SK-N-SH (cell line): ENCODE measurements at regions of chr1 and their contacts with region 1.

Region 1: GRCh38 chr1:155989242-155990004 is 11.1 kb upstream of the ARHGEF2 start:
- DNase-seq: peak; percentile 85
- H3K4me3 ChIP-seq: no peak overlapping the region; a peak in 1 of 4 replicates
- H3K27ac ChIP-seq: no peak overlapping the region
- H3K4me1 ChIP-seq: no peaks in the 10 kb centered on the region; a peak in 1 of 4 replicates
- H3K27me3 ChIP-seq: no peaks in the 10 kb centered on the region
- CTCF ChIP-seq: peak; percentile 91
- EP300 ChIP-seq: no peak
- RAD21 ChIP-seq: peak; percentile 96

Region 2: DNA sequence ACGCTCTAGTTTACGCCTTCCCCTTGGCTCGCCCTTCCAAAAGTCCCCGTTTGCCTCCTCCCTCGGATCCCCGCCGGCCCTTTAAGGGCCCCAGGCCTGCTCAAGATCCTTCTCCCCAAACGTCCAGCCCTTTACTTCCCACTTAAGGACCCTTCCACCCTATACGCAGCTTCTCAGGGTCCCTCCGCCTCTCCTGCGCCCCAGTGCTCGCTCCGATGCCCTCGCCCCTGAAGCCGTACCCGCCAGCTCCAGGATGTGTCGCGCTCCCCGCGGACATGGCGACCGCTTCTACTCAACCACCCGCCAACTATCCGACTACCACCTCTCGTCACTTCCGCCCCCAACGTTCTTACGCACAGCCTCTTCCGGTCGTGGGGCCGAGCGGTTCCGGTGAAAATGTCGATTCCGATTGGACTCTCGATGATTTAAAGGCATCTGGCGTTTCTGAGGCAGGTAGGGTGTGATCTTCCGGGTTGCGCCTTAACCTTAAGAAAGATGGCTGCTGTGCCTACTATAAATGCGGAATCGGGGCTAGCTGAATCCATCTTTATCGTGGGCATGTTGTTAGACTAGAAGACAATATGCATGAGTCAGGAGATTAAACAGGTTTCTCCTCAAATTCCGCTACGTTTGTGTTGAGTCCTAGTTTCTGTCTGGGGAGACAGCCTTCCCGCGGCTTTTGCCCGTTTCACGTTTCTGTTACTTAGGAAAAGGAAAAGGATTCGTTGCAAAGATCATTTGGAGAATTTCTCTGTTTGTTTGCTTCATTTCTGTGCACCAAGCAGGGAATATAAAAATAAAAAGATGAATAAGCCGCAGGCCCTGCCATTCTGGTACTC is 55.1 kb before region 1 on chr1 and contains the start of gene KHDC4:
- CTCF ChIA-PET with region 1: interaction called, 83 read pairs
- POLR2A ChIA-PET with region 1: interaction called, 6 read pairs
- DNase-seq: peak; percentile 89
- H3K4me3 ChIP-seq: peak within 1 kb of the TSS; percentile 76 to 86
- H3K27ac ChIP-seq: peak within 1 kb of the TSS; percentile 93 to 97
- H3K4me1 ChIP-seq: peaks cover 20 to 25% of the 10 kb centered on the region in 2 experiments
- H3K27me3 ChIP-seq: no peaks in the 10 kb centered on the region
- CTCF ChIP-seq: no peak
- EP300 ChIP-seq: peak in 1 of 2 experiments; percentile 62; a peak in 3 of 4 replicates
- RAD21 ChIP-seq: no peak
- polyA plus RNA-seq, gene KHDC4: 43.1 and 94.4 TPM in 2 replicates

Region 3: GRCh38 chr1:155946633-155947219 is 42.7 kb before region 1 on chr1:
- CTCF ChIA-PET with region 1: interaction called, 18 read pairs
- POLR2A ChIA-PET with region 1: no interaction called
- DNase-seq: no peak
- H3K4me3 ChIP-seq: no peak overlapping the region
- H3K27ac ChIP-seq: no peak overlapping the region
- H3K4me1 ChIP-seq: peaks cover 0 to under 1% of the 10 kb centered on the region in 2 experiments; a peak in 1 of 4 replicates
- H3K27me3 ChIP-seq: no peaks in the 10 kb centered on the region
- CTCF ChIP-seq: no peak
- EP300 ChIP-seq: no peak
- RAD21 ChIP-seq: no peak

Region 4: DNA sequence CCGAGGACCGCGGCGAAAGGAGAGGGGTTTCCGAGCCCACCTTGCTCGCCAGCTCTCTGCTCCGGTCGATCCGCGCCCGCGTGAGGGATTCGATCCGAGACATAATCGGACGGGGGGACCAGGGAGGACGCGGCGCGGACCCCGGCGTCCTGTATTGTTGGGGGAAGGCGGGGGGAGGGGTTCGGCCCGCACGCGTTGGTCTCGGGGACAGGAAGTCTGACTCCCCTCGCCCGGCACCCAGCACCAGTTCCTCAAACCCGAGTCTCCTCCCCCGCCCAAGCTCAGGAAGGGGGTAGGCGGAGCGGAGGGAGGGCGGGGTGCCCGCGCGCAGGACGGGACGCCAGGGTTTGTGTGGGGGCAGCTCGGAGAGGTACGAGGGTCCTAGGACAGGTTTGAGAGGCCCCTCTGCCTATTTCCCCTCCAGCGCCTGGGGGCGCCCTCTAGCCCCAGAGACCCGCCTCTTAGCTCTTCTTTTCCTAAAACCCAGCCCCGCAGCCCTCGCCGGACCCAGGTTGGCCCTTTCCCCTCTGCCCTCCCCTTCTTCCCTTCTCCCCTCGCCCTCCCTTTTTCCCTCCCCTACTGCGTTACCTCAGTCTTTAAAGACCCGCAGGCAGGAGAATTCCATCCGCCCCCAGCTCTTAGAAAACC is 11.0 kb before region 1 on chr1 and contains the start of gene ARHGEF2:
- CTCF ChIA-PET with region 1: interaction called, 44 read pairs
- POLR2A ChIA-PET with region 1: interaction called, 6 read pairs
- DNase-seq: peak; percentile 91
- H3K4me3 ChIP-seq: peak within 1 kb of the TSS; percentile 88 to 91
- H3K27ac ChIP-seq: peak within 1 kb of the TSS; percentile 87 to 93
- H3K4me1 ChIP-seq: peaks cover 42 to 57% of the 10 kb centered on the region in 2 experiments
- H3K27me3 ChIP-seq: no peaks in the 10 kb centered on the region
- CTCF ChIP-seq: peak; percentile 52
- EP300 ChIP-seq: no peak
- RAD21 ChIP-seq: 0 out of 2 replicates have a peak, but pooled peaks have one; percentile 7
- polyA plus RNA-seq, gene ARHGEF2: 32.4 and 50.8 TPM in 2 replicates

Region 5: GRCh38 chr1:156006666-156007376 is 17.4 kb after region 1 on chr1:
- CTCF ChIA-PET with region 1: interaction called, 61 read pairs
- POLR2A ChIA-PET with region 1: no interaction called
- DNase-seq: no peak
- H3K4me3 ChIP-seq: no peak overlapping the region
- H3K27ac ChIP-seq: no peak overlapping the region
- H3K4me1 ChIP-seq: peaks cover 0 to 6% of the 10 kb centered on the region in 2 experiments; a peak in 1 of 4 replicates
- H3K27me3 ChIP-seq: no peaks in the 10 kb centered on the region
- CTCF ChIP-seq: no peak
- EP300 ChIP-seq: no peak
- RAD21 ChIP-seq: no peak